G401 (cell line): ENCODE measurements at regions of chr16 and their contacts with region 1.

Region 1: DNA sequence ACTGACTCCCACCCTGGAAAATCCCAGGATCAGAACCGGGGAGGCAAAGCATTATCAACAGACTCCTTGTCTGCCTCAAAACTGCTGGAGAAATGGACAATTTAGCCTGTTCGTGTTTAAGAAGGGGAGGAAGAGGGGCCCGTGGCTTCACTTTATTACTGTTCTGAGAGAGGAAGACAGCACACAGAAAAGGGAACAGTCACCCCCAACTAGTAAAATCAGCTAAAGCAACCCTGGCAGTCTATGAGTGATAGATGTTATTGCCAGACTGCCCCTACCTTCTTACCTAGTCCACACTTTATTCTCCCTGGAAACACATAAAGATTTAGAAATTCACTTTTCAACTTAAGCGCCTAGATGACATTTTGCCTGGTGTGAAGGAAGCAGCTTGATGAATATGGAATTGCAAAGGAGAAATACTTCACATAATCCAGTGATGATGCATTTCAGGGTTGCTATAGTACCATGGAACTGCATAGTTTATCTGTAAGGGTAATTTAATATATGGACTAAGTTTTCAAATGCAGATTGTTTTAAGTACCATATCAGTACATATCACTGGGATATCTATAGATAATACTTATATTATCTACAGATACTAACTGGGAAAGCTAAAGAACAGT is 36.9 kb upstream of the TRAP1 start:
- DNase-seq: no peak

Region 2: GRCh38 chr16:3645504-3646347 is 108.5 kb before region 1 on chr16:
- in situ Hi-C with region 1: loop called (anchors 10 kb)
- DNase-seq: no peak

Region 3: GRCh38 chr16:3819746-3820724 is 65.8 kb after region 1 on chr16:
- in situ Hi-C with region 1: loop called (anchors 10 kb)
- DNase-seq: peak; percentile 67

Region 4: GRCh38 chr16:3842994-3843393 is 88.8 kb after region 1 on chr16:
- in situ Hi-C with region 1: no loop called
- DNase-seq: no peak